CD14-positive monocyte (primary cell): ENCODE measurements at regions of chr2 and their contacts with region 1.

Region 1: GRCh38 chr2:219253753-219254590 is at the start of gene TUBA4A:
- DNase-seq: peak; percentile 81 to 87 (median 83)
- H3K4me3 ChIP-seq: peak within 1 kb of the TSS; percentile 88 to 96 (median 88)
- H3K4me3 Mint-ChIP-seq: peak within 1 kb of the TSS; percentile 90 to 96
- H3K27ac ChIP-seq: peak within 1 kb of the TSS; percentile 80 to 90
- H3K27ac Mint-ChIP-seq: peak within 1 kb of the TSS; percentile 92 to 98 (median 95)
- H3K4me1 ChIP-seq: peaks cover 47 to 59% of the 10 kb centered on the region in 2 donors
- H3K4me1 Mint-ChIP-seq: peaks cover 47% of the 10 kb centered on the region
- H3K27me3 ChIP-seq: no peaks in the 10 kb centered on the region
- H3K27me3 Mint-ChIP-seq: peaks cover 0 to 3% (median 2%) of the 10 kb centered on the region in 3 donors
- CTCF ChIP-seq: no peak
- polyA plus RNA-seq, gene TUBA4A: 72.7 to 452 (median 81.9) TPM

Region 2: GRCh38 chr2:219155054-219155644 is 98.8 kb before region 1 on chr2:
- intact Hi-C with region 1: no loop called
- DNase-seq: peak; percentile 47 to 72 (median 64)
- H3K4me3 ChIP-seq: no peak overlapping the region
- H3K4me3 Mint-ChIP-seq: no peak overlapping the region
- H3K27ac ChIP-seq: no peak overlapping the region
- H3K27ac Mint-ChIP-seq: no peak overlapping the region
- H3K4me1 ChIP-seq: peaks cover 7% of the 10 kb centered on the region in 2 donors
- H3K4me1 Mint-ChIP-seq: peaks cover 7% of the 10 kb centered on the region
- H3K27me3 ChIP-seq: no peaks in the 10 kb centered on the region
- H3K27me3 Mint-ChIP-seq: peaks cover 0 to 3% (median 2%) of the 10 kb centered on the region in 3 donors
- CTCF ChIP-seq: peak; percentile 70

Region 3: DNA sequence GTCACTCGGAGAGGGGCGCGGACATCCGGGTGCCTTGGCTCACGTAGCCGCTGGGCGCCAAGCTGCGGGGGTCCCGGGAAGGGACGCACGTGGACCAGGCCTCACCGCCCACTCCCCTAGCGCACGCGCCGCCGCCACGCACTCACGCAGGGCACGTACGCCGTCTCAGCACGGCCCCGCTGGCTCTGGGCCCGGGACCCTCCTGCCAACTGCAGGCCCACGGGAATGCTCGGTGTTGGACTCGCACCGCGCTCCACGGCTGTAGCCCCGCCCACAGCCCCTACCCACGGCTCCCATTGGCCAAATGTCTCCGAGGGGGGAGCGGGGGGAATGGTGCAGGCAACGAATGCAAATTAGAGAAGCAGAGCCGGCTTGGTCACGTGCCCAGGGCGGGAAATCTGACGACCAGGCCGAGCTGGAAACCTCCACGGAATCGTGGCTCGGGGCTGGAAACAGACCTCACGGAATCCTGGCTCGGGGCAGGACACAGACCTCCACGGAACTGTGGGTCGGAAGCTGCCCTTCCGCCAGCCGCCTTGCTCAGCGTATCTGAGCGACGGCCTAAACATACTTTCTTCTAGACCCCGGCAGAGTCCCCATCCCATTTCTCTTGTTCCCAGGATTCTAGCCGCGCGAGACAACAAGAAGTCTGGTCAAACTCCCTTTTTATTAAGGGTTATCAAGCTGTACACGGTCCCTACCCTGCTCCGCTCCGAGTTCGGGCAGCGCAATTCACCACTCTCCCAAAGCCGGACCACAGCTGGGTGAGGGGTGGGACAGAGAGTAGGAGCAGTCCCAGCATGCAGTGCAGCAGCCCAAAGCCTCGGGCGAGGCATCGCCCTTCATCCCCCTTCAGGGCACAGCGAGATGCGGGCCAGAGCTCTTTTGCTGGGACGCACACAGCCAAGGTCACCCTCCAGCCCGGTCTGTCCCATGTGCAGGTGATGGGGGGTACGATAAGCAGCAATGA is 35.0 kb before region 1 on chr2 and contains the start of gene ABCB6:
- intact Hi-C with region 1: loop called (anchors 5 kb)
- DNase-seq: peak; percentile 76 to 84 (median 78)
- H3K4me3 ChIP-seq: peak within 1 kb of the TSS; percentile 38 to 79 (median 46)
- H3K4me3 Mint-ChIP-seq: peak within 1 kb of the TSS; percentile 70 to 86
- H3K27ac ChIP-seq: peak within 1 kb of the TSS in 1 of 2 donors; percentile 36
- H3K27ac Mint-ChIP-seq: peak within 1 kb of the TSS; percentile 37 to 87 (median 80)
- H3K4me1 ChIP-seq: peaks cover 32 to 37% of the 10 kb centered on the region in 2 donors
- H3K4me1 Mint-ChIP-seq: peaks cover 33% of the 10 kb centered on the region
- H3K27me3 ChIP-seq: peaks cover 0 to 53% of the 10 kb centered on the region in 2 donors
- H3K27me3 Mint-ChIP-seq: peaks cover 49 to 62% (median 50%) of the 10 kb centered on the region in 3 donors
- CTCF ChIP-seq: no peak
- polyA plus RNA-seq, gene ABCB6: 0.28 to 4.8 (median 0.58) TPM

Region 4: GRCh38 chr2:219278655-219279516 is 24.9 kb after region 1 on chr2 and contains the start of gene DNAJB2:
- intact Hi-C with region 1: loop called (anchors 1 to 2 kb)
- DNase-seq: peak; percentile 99 to 100 (median 100)
- H3K4me3 ChIP-seq: peak within 1 kb of the TSS; percentile 54 to 77 (median 57)
- H3K4me3 Mint-ChIP-seq: peak within 1 kb of the TSS; percentile 88 to 91
- H3K27ac ChIP-seq: peak within 1 kb of the TSS; percentile 85 to 97
- H3K27ac Mint-ChIP-seq: peak within 1 kb of the TSS; percentile 92 to 98 (median 97)
- H3K4me1 ChIP-seq: peaks cover 23 to 31% of the 10 kb centered on the region in 2 donors
- H3K4me1 Mint-ChIP-seq: peaks cover 29% of the 10 kb centered on the region
- H3K27me3 ChIP-seq: no peaks in the 10 kb centered on the region
- H3K27me3 Mint-ChIP-seq: peaks cover 2 to 7% (median 7%) of the 10 kb centered on the region in 3 donors
- CTCF ChIP-seq: no peak
- polyA plus RNA-seq, gene DNAJB2: 1.7 to 55.4 (median 1.9) TPM